ENCODE measurements at regions of chr12 and their contacts with region 1.

Region 1: DNA sequence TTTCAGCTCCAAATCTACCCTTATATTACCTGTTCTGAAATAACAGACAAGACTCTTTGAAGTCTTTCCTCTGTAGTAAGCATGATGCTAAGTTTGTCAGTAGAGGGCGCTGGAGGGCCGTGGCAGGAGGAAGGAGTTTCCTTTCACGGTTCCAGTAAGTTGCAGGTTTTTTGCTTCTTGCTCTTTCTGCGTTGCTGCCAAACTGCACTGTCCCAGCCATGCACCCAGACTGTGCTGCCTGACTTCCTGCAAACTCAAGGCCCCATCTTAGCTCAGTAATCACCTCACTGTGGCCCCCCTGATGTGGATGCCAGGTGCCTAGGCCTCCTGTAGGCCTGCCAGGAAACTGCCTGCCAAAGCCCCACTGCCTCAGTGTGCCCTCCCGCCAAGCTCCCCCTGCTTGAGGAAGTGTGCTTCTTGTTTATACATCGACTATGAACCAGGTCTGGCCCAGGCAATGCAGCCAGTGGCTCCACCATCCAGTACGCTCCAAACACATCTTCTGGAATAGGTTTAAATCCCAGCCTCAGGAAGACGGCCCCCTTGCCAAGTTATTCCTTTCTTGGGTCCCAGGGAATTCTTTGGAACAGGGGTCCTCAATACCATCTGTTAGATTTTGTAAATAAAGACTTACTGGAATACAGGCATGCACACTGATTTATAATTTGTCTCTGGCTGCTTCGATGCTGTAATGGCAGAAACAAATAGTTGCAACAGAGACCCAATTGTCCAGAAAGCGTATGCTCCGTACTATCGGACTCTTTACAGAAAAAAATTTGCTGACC is 193.7 kb upstream of the LRIG3 start:
- H3K4me3 Mint-ChIP-seq: no peak overlapping the region
- H3K27ac Mint-ChIP-seq: no peak overlapping the region
- H3K4me1 Mint-ChIP-seq: peaks cover 4% of the 10 kb centered on the region
- H3K27me3 Mint-ChIP-seq: no peaks in the 10 kb centered on the region

Region 2: GRCh38 chr12:59005195-59005955 is 108.6 kb before region 1 on chr12:
- intact Hi-C with region 1: no loop called
- H3K4me3 Mint-ChIP-seq: no peak overlapping the region
- H3K27ac Mint-ChIP-seq: no peak overlapping the region
- H3K4me1 Mint-ChIP-seq: no peaks in the 10 kb centered on the region
- H3K27me3 Mint-ChIP-seq: no peaks in the 10 kb centered on the region

Region 3: GRCh38 chr12:59149997-59150642 is 36.1 kb after region 1 on chr12:
- intact Hi-C with region 1: loop called (anchors 2 kb)
- H3K4me3 Mint-ChIP-seq: no peak overlapping the region
- H3K27ac Mint-ChIP-seq: no peak overlapping the region
- H3K4me1 Mint-ChIP-seq: no peaks in the 10 kb centered on the region
- H3K27me3 Mint-ChIP-seq: peaks cover 2% of the 10 kb centered on the region